ENCODE measurements at regions of chrX and their contacts with region 1.

Region 1: DNA sequence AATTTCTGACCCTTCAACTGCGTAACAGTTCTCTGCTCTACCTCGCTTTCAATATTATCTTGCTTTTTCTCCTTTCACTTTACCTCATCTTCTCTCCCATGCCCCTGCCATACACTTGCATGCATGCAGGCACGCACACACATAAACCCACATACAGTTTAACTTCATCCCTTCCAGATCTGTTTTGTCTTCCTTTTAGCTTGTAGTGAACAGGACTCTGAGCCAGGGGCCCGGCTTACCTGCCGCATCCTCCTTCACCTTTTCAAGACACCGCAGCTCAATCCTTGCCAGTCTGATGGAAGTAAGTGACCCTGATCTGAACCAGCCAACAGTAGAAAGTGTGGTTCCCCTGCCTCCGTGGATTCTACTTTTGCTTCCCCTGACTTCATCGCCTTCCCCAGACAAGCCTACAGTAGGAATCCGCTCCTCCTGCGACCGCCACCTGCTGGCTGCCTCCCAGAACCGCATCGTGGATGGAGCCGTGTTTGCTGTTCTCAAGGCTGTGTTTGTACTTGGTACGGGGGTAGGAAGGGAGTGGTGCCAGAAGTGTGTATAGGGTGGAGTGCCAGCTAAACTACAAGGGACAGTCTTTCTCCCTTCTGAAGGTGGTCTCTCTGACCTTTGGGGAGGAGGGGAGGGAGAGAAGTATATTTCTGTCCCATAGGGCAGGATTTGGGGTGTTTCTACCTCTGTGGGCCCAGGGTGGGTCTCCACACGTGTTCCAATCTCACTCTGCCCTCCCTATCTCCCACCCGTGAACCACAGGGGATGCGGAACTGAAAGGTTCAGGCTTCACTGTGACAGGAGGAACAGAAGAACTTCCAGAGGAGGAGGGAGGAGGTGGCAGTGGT is 10.7 kb downstream of the MED12 start:
- DNase-seq: peak; percentile 65
- CTCF ChIP-seq: peak; percentile 73

Region 2: DNA sequence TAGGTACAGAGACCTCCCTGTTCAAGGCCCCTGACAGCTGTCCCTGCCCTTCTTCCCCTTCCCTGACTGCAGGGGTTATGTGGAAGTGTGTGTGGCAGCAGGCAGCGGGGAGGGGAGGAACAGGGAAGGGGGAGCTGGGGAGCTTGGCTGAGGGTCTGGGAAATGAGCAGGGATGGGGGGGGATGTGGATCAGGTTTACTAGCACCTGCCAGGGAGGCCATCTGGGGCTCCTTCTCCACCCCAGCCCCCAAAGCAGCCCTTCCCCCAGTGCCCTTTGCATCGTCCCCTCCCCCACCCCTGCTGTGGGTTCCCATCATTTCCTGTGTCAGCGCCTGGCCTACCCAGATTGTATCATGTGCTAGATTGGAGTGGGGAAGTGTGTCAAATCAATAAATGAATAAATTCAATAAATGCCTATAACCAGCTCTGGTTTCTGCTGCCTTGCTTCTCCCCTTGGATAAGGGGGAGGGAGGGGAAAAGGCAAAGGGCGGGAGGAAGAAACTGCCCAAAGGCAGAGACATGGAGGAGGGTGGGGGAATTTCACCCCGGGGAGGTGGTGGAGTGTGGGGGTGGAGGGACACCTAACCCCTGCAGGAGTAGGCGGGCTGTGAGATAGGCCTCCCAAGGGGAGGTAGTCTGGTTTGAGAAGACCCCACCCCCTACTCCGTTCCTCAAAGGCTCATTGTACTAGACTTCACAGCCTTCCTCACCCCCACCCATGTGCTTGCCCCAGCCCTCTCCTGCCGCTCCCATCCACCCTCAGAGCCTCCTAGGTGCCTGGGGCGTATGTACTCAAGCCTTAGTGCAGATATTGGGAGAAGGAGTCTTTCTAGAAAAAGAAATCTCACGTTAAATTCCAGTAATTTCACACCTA is 25.8 kb before region 1 on chrX:
- CTCF ChIA-PET with region 1: interaction called, 13 read pairs
- POLR2A ChIA-PET with region 1: no interaction called
- DNase-seq: peak; percentile 54
- CTCF ChIP-seq: no peak

Region 3: GRCh38 chrX:71111141-71111843 is 17.8 kb before region 1 on chrX and contains the start of gene IL2RG:
- CTCF ChIA-PET with region 1: interaction called, 12 read pairs
- POLR2A ChIA-PET with region 1: no interaction called
- DNase-seq: peak; percentile 75
- CTCF ChIP-seq: no peak

Region 4: GRCh38 chrX:71118032-71118984 is 10.8 kb before region 1 on chrX and contains the start of gene MED12:
- CTCF ChIA-PET with region 1: interaction called, 23 read pairs
- POLR2A ChIA-PET with region 1: interaction called, 3 read pairs
- DNase-seq: peak; percentile 86
- CTCF ChIP-seq: no peak